HepG2 (cell line): ENCODE measurements at regions of chr2 and their contacts with region 1.

Region 1: DNA sequence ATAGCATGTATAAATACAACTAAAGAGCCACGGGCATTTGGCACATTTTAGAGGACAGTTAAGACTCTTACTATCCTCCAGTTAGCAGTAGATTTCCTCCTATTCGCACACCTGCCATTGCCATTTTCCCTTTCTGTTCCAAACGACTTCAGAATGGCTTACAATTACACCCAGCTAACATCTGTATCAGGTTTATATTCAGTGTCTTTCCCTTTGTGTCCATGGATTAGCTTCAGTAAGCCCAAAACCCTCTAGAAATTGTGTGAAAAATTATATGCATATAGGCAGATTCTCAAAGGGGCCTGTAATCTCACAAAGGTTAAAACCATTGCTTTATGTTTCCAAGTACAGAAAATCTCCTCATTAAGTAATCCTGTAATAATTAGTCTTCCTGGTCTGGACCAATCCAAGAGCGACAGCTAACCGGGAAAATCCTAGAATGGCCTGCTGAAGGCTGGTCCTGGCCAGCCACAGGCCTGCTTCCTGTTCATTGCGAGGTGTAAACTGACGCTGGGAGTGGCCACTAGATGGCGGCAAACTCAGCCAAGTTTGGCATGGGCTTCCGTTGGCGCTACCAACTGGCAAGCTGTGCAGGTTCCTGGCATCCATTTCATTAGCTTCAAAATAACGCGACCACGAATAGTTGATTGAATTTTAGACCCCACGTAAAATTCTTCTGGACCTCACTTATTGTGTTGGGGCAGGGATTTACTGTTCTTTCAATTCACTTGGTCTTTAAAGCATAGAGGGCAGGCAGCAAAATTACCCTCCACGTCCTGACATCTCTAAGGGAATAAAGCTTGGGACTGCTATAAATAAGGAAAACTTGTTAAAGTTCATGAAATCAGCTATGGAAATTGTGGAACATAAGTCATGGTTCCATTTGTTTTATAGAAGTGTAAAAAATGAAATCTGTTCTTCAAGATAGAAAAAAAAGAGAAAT is 17.1 kb downstream of the ARHGAP25 start:
- DNase-seq: peak; percentile 71
- ATAC-seq: peak; percentile 99
- H3K4me3 ChIP-seq: no peak overlapping the region
- H3K27ac ChIP-seq: no peak overlapping the region
- H3K4me1 ChIP-seq: no peaks in the 10 kb centered on the region
- H3K27me3 ChIP-seq: peaks cover 1 to 26% of the 10 kb centered on the region in 2 experiments; a peak in 3 of 5 replicates
- CTCF ChIP-seq: peak; percentile 95
- EP300 ChIP-seq: no peak
- POLR2A ChIP-seq: no peak
- RAD21 ChIP-seq: peak; percentile 84

Region 2: GRCh38 chr2:68837164-68837860 is 85.6 kb after region 1 on chr2:
- CTCF ChIA-PET with region 1: interaction called, 16 read pairs
- POLR2A ChIA-PET with region 1: no interaction called
- in situ Hi-C with region 1: no loop called
- intact Hi-C with region 1: loop called (anchors 1 kb)
- DNase-seq: peak; percentile 55
- ATAC-seq: peak; percentile 97
- H3K4me3 ChIP-seq: no peak overlapping the region
- H3K27ac ChIP-seq: no peak overlapping the region
- H3K4me1 ChIP-seq: no peaks in the 10 kb centered on the region
- H3K27me3 ChIP-seq: peaks cover 4 to 8% of the 10 kb centered on the region in 2 experiments; a peak in 3 of 5 replicates
- CTCF ChIP-seq: peak; percentile 86
- EP300 ChIP-seq: no peak
- POLR2A ChIP-seq: no peak
- RAD21 ChIP-seq: peak; percentile 58

Region 3: DNA sequence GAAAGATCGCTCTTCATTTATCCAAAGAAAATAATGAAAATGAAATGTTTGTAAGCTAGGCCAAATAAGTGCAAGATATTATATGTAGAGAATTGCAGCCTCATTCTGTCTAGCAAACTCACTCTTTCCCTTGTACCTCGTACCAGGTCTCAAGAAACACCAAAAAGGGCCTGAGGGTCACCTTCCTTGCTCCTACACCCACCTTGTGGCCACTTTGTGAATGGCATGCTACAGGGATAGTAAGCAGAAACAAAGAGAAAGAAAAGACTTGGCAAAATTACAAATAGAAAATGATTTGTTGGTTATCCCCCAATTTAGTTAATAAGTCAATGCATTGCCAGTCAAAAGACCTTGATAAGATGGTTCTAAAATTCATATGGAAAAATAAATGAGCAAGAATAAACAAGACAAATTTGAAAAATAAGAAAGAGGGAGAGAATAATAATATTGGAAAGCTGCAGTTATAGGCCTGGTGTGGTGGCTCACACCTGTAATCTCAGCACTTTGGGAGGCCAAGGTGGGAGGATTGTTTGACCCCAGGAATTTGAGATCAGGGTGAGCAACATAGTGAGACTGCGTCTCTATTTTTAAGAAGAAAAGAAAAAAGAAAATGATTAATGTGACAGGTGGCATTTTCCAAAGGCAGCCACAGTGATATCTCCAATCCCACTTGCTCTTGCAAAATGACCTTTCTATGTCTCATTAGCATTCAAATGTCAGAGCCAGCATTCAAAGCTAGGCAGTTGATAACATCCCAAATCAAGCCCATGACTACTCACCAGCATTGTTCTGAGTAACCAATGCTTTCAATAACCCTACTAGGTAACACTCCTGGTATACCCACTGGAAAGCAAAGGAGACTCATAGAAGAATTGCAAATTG is 158.4 kb after region 1 on chr2:
- CTCF ChIA-PET with region 1: interaction called, 31 read pairs
- POLR2A ChIA-PET with region 1: no interaction called
- in situ Hi-C with region 1: no loop called
- intact Hi-C with region 1: loop called (anchors 1 kb)
- DNase-seq: peak; percentile 58
- ATAC-seq: peak; percentile 73
- H3K4me3 ChIP-seq: no peak overlapping the region
- H3K27ac ChIP-seq: no peak overlapping the region
- H3K4me1 ChIP-seq: peaks cover 10% of the 10 kb centered on the region
- H3K27me3 ChIP-seq: peaks cover 1 to 15% of the 10 kb centered on the region in 2 experiments; a peak in 1 of 5 replicates
- CTCF ChIP-seq: peak; percentile 84
- EP300 ChIP-seq: no peak
- POLR2A ChIP-seq: no peak
- RAD21 ChIP-seq: no peak

Region 4: GRCh38 chr2:68925295-68925896 is 173.7 kb after region 1 on chr2:
- CTCF ChIA-PET with region 1: interaction called, 30 read pairs
- POLR2A ChIA-PET with region 1: no interaction called
- in situ Hi-C with region 1: no loop called
- intact Hi-C with region 1: loop called (anchors 1 kb)
- DNase-seq: peak; percentile 55
- ATAC-seq: peak; percentile 89
- H3K4me3 ChIP-seq: no peak overlapping the region
- H3K27ac ChIP-seq: no peak overlapping the region
- H3K4me1 ChIP-seq: peaks cover 8% of the 10 kb centered on the region; the same call in 1 of the 2 replicates
- H3K27me3 ChIP-seq: peaks cover 0 to 35% of the 10 kb centered on the region in 2 experiments; a peak in 4 of 5 replicates
- CTCF ChIP-seq: peak; percentile 85
- EP300 ChIP-seq: no peak
- POLR2A ChIP-seq: no peak
- RAD21 ChIP-seq: peak; percentile 76